Pancreas (tissue), 10 donors: ENCODE measurements at regions of chr5 and their contacts with region 1.

Region 1: GRCh38 chr5:174418928-174419796 is 305.2 kb upstream of the MSX2 start:
- DNase-seq: peak; percentile 76 to 97 (median 89)
- ATAC-seq: peak; percentile 90 to 99 (median 98)
- H3K4me3 ChIP-seq: no peak overlapping the region
- H3K27ac ChIP-seq: no peak overlapping the region
- H3K4me1 ChIP-seq: no peaks in the 10 kb centered on the region
- H3K27me3 ChIP-seq: peaks cover 0 to 6% (median 0%) of the 10 kb centered on the region in 4 donors
- CTCF ChIP-seq: peak; percentile 77 to 90 (median 84)

Region 2: DNA sequence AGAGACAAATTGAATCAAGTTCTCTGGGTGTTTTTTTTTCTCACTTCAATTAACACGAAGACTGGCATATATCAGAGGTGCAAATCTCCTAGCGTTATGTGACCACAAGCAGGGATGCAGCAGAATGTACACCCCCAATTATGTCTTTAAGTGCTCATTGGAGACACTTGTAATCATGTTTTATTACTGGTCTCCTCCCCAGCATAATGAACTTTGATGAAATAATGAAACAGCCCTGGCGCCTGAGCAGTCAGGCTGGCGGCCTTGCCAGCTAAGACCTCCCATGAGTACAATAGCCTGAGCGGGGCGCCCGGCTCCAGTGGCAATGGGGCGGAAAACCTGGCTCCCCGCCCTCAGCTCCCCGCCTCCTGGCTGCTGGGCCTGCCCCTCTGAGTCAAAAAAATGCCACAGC is 95.8 kb after region 1 on chr5:
- intact Hi-C with region 1: no loop called
- DNase-seq: no peak
- ATAC-seq: no peak
- H3K4me3 ChIP-seq: no peak overlapping the region
- H3K27ac ChIP-seq: no peak overlapping the region
- H3K4me1 ChIP-seq: no peaks in the 10 kb centered on the region
- H3K27me3 ChIP-seq: no peaks in the 10 kb centered on the region
- CTCF ChIP-seq: no peak

Region 3: GRCh38 chr5:174527916-174528540 is 108.9 kb after region 1 on chr5:
- intact Hi-C with region 1: no loop called
- DNase-seq: no peak
- ATAC-seq: no peak
- H3K4me3 ChIP-seq: no peak overlapping the region
- H3K27ac ChIP-seq: no peak overlapping the region
- H3K4me1 ChIP-seq: peaks cover 0 to 8% (median 0%) of the 10 kb centered on the region in 3 donors
- H3K27me3 ChIP-seq: no peaks in the 10 kb centered on the region
- CTCF ChIP-seq: no peak

Region 4: DNA sequence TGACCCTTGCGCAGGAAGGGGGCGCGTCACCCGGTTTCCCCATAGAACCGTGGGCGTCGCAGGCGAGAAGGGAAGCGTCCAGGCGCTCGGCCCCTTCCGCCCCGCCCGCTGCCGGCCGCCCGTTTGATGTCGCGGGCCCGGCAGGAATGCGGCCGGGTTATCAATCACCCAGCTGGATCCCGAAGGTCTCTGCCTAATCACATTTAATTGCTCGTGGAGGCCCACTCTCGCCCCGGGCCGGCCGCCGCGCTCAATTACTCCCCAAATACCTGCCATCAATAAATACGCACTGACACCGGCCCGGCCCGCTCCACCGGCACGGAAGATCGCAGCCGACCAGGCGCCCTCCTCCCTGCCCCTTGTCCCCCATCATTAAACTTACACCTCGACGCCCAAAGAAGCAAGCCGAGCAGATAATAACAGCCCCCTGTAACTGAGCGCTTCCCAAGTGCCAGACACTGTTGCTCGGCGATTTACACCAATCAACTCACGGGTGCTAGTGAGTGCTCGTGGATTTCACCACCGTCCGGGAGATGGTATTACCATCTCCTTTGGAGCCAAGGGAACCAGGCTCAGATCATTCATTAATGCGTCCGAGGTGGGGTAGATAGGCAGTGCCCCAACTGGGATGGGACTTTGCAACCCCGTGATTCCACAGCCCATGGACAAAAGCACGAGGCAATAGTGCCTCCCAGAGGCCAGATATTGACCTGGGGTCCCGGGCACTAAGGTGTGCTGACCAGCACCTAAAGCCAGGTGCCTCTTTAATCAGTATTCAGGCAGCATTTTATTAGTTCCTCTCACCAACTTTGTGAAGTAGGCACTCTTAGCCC is 316.6 kb after region 1 on chr5:
- intact Hi-C with region 1: loop called in 1 of 3 experiments (anchors 2 kb)
- DNase-seq: peak in 1 of 6 donors; percentile 41
- ATAC-seq: peak; percentile 58 to 86 (median 74)
- H3K4me3 ChIP-seq: peak overlapping the region in 1 of 4 donors; percentile 7
- H3K27ac ChIP-seq: no peak overlapping the region
- H3K4me1 ChIP-seq: peaks cover 0 to 6% (median 0%) of the 10 kb centered on the region in 3 donors
- H3K27me3 ChIP-seq: peaks cover 0 to 49% (median 5%) of the 10 kb centered on the region in 4 donors
- CTCF ChIP-seq: peak in 2 of 4 donors; percentile 14 to 31

Region 5: DNA sequence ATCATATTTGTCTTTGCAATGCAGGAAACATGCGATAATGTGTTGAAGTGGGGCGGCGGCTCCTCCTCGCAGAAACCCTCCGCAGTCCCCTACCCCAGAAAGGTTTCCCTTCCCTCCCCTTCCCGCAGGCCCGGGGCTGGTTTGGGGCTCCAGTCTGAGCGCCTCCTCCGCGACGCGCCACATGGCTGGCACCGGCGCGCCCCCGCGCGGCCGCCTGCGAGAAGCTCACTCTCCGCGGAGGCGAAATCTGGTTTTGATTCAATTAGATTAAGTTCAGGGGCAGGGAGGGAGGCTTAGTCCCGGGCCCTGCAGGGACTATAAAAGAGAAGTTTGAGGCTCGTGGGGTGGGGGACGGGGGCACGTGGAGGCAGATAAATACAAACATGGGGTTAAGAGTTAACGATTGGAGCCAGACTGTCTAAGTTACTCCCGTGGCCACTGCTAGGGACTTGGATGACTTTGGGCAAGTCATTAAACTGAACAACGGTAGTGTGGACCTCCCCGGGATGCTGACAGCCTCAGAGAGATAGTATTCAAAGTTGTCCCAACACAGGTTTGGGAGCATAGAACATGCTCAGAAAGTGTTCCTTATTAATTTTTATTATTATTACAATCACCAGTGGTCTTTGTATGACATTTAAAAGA is 374.6 kb after region 1 on chr5:
- intact Hi-C with region 1: loop called in 2 of 3 experiments (anchors 5 to 10 kb)
- DNase-seq: peak; percentile 18 to 87 (median 59)
- ATAC-seq: peak; percentile 74 to 93 (median 88)
- H3K4me3 ChIP-seq: no peak overlapping the region
- H3K27ac ChIP-seq: no peak overlapping the region
- H3K4me1 ChIP-seq: no peaks in the 10 kb centered on the region
- H3K27me3 ChIP-seq: peaks cover 0 to 10% (median 0%) of the 10 kb centered on the region in 4 donors
- CTCF ChIP-seq: peak; percentile 66 to 80 (median 74)

Region 6: DNA sequence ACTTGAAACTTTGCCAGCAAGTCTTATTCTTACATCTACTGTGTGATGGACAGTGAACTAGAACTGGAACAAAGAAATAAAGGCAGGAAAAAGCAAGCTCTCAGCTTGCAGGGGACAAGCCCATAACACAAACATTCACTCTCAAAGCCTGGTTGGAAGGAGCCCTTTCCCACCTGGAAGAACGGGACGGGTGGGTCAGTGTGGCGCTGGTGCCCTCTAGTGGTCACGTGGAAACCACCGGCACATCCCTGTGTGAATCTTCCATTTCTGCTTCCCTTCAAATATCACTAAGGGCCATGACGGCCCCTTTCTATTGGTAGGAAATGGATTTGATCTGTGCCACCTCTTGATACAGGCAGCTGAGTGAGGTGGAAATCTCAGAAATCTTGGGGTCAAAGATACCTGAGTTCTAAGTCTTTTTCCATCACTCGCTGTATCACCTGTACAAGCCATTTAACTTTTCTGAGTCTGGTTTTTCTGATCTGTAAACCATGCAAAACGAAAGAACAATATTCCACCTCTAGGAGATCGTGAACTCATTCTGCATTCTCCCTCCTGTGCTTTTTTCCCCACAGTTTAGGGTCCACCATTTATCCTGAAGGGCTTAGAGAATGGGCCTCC is 516.8 kb after region 1 on chr5:
- intact Hi-C with region 1: loop called in 1 of 3 experiments (anchors 10 kb)
- DNase-seq: peak; percentile 24 to 86 (median 64)
- ATAC-seq: peak; percentile 58 to 93 (median 87)
- H3K4me3 ChIP-seq: no peak overlapping the region
- H3K27ac ChIP-seq: no peak overlapping the region
- H3K4me1 ChIP-seq: no peaks in the 10 kb centered on the region
- H3K27me3 ChIP-seq: no peaks in the 10 kb centered on the region
- CTCF ChIP-seq: peak; percentile 76 to 90 (median 83)